Thyroid gland (tissue), 4 donors: ENCODE measurements at regions of chr1 and their contacts with region 1.

Region 1: DNA sequence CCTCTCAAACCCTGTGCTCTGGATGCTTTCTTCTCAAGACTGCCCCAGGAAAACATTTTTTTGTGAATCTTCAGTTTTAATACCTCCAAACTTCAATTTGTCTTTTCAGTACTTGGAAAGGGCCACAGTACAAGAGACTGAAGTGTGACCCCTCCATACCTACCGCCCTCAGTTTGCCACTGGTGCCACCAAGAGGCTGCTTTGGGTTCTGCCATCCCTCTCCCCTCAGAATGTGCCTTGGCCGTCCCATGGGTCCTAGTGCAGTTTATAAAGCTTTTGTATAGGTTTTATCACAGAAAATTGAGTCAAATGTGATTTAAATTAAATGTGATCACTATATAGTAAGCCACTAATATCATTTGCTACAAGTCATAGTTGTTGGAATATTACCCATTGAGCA is 60.8 kb upstream of the PGD start:
- DNase-seq: peak; percentile 33 to 47
- H3K4me3 ChIP-seq: no peak overlapping the region
- H3K27ac ChIP-seq: peak overlapping the region in 2 of 3 donors; percentile 8 to 15
- H3K4me1 ChIP-seq: peaks cover 0 to 16% of the 10 kb centered on the region in 2 donors
- H3K27me3 ChIP-seq: no peaks in the 10 kb centered on the region
- CTCF ChIP-seq: peak; percentile 22 to 68 (median 52)
- POLR2A ChIP-seq: no peak

Region 2: DNA sequence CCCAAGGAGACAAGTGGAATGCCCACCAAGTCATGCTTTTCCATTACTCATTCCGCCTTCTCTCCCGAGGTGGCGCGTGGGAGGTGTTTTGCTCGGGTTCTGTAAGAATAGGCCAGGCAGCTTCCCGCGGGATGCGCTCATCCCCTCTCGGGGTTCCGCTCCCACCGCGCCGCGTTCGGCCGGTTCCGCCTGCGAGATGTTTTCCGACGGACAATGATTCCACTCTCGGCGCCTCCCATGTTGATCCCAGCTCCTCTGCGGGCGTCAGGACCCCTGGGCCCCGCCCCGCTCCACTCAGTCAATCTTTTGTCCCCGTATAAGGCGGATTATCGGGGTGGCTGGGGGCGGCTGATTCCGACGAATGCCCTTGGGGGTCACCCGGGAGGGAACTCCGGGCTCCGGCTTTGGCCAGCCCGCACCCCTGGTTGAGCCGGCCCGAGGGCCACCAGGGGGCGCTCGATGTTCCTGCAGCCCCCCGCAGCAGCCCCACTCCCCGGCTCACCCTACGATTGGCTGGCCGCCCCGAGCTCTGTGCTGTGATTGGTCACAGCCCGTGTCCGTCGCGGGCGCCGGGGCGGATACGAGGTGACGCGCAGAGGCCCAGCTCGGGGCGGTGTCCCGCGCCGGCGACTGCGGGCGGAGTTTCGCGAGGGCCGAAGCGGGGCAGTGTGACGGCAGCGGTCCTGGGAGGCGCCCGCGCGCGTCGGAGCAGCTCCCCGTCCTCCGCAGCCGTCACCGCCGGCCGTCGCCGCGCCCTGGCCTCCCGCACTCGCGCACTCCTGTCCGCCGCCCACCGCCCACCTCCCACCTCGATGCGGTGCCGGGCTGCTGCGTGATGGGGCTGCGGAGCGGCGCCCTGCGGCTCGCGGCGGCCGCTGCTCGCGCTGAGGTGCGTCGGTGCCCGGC is 127.9 kb before region 1 on chr1 and contains the start of gene KIF1B:
- intact Hi-C with region 1: loop called (anchors 10 kb)
- DNase-seq: peak; percentile 99
- H3K4me3 ChIP-seq: peak within 1 kb of the TSS; percentile 64 to 73 (median 68)
- H3K27ac ChIP-seq: peak within 1 kb of the TSS; percentile 88 to 95 (median 90)
- H3K4me1 ChIP-seq: peaks cover 15 to 29% of the 10 kb centered on the region in 2 donors
- H3K27me3 ChIP-seq: no peaks in the 10 kb centered on the region
- CTCF ChIP-seq: peak; percentile 91 to 98 (median 95)
- POLR2A ChIP-seq: peak; percentile 95 to 100
- total RNA-seq, gene KIF1B: 51.7 to 70.5 (median 53.5) TPM

Region 3: DNA sequence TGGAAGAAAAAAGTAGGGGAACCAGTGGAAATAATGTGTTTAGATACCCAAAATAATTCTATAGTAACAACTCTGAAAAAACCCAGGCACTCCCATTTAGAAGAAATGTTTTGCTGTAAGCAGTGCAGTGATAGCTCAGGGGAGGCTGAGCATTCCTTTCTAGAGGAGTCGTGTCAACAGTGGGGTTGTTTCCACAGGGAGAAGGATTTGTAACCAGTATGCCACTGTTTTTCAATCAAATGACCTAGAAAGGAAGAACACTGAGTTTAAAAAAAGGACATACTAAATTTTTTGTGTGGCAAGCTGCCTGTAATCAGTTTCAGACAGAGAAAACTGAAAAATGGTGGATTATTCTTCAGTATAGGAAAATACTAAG is 63.2 kb after region 1 on chr1:
- intact Hi-C with region 1: no loop called
- DNase-seq: no peak
- H3K4me3 ChIP-seq: no peak overlapping the region
- H3K27ac ChIP-seq: no peak overlapping the region
- H3K4me1 ChIP-seq: peaks cover 15 to 23% of the 10 kb centered on the region in 2 donors
- H3K27me3 ChIP-seq: no peaks in the 10 kb centered on the region
- CTCF ChIP-seq: no peak
- POLR2A ChIP-seq: no peak